Cardiac septum (tissue), 1 donor: ENCODE measurements at regions of chr1 and their contacts with region 1.

Region 1: GRCh38 chr1:235045034-235045720 is 83.5 kb downstream of the TOMM20 start:
- DNase-seq: no peak

Region 2: DNA sequence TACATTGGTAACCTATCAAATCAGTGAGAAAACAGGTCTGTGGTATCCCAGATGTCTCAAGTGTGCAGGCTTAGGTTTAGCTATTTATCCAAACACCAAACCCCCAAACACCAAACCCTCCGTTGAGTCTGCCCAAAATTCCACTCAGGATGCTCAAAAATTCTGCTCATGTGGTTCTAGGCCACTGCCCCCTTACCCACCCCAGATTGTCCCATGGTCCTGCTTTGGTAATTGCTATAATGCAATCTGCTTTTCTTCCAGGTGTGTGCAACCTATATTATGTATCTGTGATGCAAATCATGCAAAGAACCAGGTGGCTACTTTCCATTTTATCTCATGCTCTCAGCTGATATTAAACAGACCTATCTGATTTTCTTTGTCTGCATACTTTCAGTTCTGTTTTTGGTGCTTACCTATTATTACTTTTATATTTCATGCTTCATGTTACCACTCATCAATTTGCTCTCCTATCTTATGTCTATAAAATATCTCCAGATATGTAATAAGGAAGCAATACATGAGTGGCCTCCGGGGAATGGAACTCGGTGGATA is 40.3 kb before region 1 on chr1:
- intact Hi-C with region 1: loop called (anchors 5 kb)
- DNase-seq: peak; percentile 14